ENCODE measurements at regions of chr6 and their contacts with region 1.

Region 1: DNA sequence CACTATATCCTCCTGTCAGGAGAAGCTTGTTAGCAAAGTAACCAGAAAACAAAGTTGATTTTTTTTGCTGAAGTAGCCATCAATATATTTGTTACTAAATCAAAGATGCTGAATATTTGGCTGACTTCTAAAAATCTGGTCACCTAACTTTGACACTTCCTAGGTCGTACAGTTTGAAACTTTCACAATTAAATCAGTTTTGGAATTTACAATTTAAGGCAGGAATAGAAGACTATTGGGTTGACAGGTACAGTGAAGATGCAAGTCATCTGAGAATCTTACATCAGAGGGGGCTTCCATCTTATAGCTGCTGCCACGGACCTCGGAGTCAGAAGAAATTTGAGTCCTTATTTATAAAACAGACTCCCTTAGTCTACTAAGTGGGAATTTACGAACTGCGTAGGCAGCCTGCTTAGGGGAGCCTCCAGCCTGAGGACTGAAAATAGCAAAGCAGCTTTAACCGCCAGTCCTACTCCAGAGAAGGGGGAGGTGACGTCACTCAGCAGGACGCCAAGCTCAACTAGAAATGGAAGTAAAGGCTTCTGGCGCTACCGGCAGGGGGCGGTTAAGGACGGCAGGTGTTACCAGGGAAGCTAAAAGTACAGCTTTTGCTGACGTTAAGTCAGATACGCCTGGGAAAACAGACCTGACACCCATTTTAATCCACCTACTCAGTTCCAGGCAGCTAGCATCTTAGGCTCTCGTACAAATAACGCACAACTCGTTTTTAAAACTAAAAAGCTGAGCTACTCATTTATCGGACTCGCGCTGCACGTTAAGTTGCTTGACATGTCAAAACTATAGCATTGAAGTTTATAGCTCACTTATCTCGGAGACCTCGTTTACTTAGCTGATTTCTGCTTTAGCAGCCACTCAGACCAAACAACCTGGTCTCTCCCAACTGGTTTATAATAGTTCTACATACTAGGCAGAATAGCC is 61.1 kb upstream of the HFE start:
- DNase-seq: peak; percentile 74 to 99 (median 89)
- ATAC-seq: peak; percentile 43
- H3K4me3 ChIP-seq: peak overlapping the region; percentile 50 to 76
- H3K4me3 Mint-ChIP-seq: peak overlapping the region; percentile 86
- H3K27ac ChIP-seq: peak overlapping the region; percentile 93 to 96
- H3K27ac Mint-ChIP-seq: peak overlapping the region; percentile 98
- H3K4me1 ChIP-seq: peaks cover 25% of the 10 kb centered on the region
- H3K4me1 Mint-ChIP-seq: peaks cover 48% of the 10 kb centered on the region
- H3K27me3 ChIP-seq: no peaks in the 10 kb centered on the region
- H3K27me3 Mint-ChIP-seq: no peaks in the 10 kb centered on the region
- CTCF ChIP-seq: peak; percentile 80

Region 2: GRCh38 chr6:25962149-25963127 is 63.7 kb before region 1 on chr6 and contains the start of gene TRIM38:
- CTCF ChIA-PET with region 1: interaction called, 3 read pairs
- POLR2A ChIA-PET with region 1: interaction called, 15 read pairs
- intact Hi-C with region 1: loop called in 1 of 2 experiments (anchors 2 kb)
- DNase-seq: peak; percentile 50 to 95 (median 77)
- ATAC-seq: peak; percentile 86
- H3K4me3 ChIP-seq: peak within 1 kb of the TSS; percentile 76 to 86
- H3K4me3 Mint-ChIP-seq: peak within 1 kb of the TSS; percentile 95
- H3K27ac ChIP-seq: peak within 1 kb of the TSS; percentile 91 to 95
- H3K27ac Mint-ChIP-seq: peak within 1 kb of the TSS; percentile 98
- H3K4me1 ChIP-seq: peaks cover 64% of the 10 kb centered on the region
- H3K4me1 Mint-ChIP-seq: peaks cover 81% of the 10 kb centered on the region
- H3K27me3 ChIP-seq: no peaks in the 10 kb centered on the region
- H3K27me3 Mint-ChIP-seq: no peaks in the 10 kb centered on the region
- CTCF ChIP-seq: no peak
- total RNA-seq, gene TRIM38: 13.2 to 13.6 TPM

Region 3: DNA sequence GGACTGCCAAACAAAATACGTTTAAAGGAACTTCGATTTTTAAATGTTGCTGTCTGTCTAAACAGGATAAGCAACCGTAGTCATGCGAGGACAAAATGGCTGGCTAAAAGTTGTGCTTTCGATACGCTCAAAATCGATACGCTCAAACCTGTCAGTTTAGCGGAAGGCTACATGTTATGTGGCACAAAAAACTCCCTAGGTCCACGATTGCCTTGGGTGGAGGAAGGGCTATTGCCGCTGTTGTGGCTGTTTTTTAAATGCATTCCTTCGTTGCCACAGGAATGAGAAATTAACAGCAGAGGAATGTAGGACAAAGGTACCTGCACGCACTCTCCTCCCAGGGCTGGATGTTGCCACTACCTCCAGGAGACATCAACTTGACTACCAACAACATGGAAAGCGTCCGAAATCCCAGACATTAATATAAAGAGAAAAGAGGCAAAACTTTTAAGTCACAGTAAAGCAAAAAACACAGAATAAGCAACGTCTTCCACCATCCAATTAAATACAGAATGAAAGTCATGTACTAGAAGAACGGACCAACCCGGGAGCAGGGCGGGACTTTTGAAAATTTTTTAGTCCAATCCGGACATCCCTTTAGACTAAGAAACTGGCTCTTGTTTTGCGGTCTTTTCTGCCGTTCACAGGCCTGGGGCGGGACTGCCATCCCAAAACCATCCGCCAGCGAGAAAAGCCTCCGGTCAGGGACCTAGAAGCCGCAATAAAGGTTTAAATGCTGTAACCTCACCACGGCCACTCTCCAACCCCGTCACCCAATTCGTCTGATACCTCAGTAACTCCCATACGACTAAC is 28.9 kb after region 1 on chr6:
- CTCF ChIA-PET with region 1: interaction called, 3 read pairs
- POLR2A ChIA-PET with region 1: interaction called, 70 read pairs
- intact Hi-C with region 1: loop called (anchors 1 kb)
- DNase-seq: peak; percentile 71 to 94 (median 88)
- ATAC-seq: peak; percentile 72
- H3K4me3 ChIP-seq: peak overlapping the region; percentile 75 to 85
- H3K4me3 Mint-ChIP-seq: peak overlapping the region; percentile 96
- H3K27ac ChIP-seq: peak overlapping the region; percentile 85 to 96
- H3K27ac Mint-ChIP-seq: peak overlapping the region; percentile 99
- H3K4me1 ChIP-seq: peaks cover 17% of the 10 kb centered on the region
- H3K4me1 Mint-ChIP-seq: peaks cover 23% of the 10 kb centered on the region
- H3K27me3 ChIP-seq: no peaks in the 10 kb centered on the region
- H3K27me3 Mint-ChIP-seq: no peaks in the 10 kb centered on the region
- CTCF ChIP-seq: no peak

Region 4: DNA sequence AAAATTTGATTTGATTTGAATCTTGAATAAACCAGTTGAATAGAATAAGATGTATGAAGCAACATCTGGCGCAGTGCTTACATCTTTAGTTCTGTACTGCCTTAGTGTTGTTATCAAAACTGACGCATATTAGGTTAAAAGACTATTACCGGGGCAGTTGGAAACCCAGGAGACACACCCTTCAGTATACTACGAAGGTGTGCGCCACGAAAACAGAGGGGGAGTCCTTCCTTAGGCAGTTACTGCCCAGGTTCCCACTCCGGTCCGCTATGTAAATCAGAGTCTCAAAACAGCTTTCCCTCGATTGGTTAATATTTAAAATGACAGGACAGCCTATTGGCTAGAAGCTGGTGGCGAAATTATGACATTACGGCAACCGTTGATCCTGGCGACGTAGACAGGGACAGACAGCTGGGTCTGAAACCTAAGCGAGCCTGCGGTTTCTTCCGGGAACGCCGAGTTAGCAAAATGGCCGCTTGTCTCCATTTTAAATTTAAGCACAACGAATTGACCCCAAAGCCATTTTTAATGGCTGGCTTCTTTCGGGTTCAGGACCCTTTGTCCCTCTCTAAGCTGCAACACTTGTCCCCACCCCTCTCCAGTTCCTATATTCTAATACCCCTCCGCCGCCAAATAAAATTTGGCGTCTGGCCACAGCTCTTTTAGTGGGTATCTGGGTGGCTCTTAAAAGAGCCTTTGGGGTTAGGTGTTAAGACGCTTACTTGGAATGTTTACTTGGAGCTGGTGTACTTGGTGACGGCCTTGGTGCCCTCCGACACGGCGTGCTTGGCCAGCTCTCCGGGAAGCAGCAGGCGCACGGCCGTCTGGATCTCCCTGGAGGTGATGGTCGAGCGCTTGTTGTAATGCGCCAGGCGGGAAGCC is 96.9 kb after region 1 on chr6:
- CTCF ChIA-PET with region 1: interaction called, 6 read pairs
- POLR2A ChIA-PET with region 1: interaction called, 340 read pairs
- intact Hi-C with region 1: loop called in 1 of 2 experiments (anchors 1 kb)
- DNase-seq: peak; percentile 73 to 99 (median 91)
- ATAC-seq: peak; percentile 54
- H3K4me3 ChIP-seq: peak overlapping the region; percentile 78 to 98
- H3K4me3 Mint-ChIP-seq: peak overlapping the region; percentile 94
- H3K27ac ChIP-seq: peak overlapping the region; percentile 87 to 94
- H3K27ac Mint-ChIP-seq: peak overlapping the region; percentile 99
- H3K4me1 ChIP-seq: peaks cover 20% of the 10 kb centered on the region
- H3K4me1 Mint-ChIP-seq: peaks cover 27% of the 10 kb centered on the region
- H3K27me3 ChIP-seq: no peaks in the 10 kb centered on the region
- H3K27me3 Mint-ChIP-seq: no peaks in the 10 kb centered on the region
- CTCF ChIP-seq: no peak

Region 5: GRCh38 chr6:26136321-26136720 is 110.2 kb after region 1 on chr6:
- CTCF ChIA-PET with region 1: no interaction called
- POLR2A ChIA-PET with region 1: no interaction called
- intact Hi-C with region 1: no loop called
- DNase-seq: no peak
- ATAC-seq: no peak
- H3K4me3 ChIP-seq: no peak overlapping the region
- H3K4me3 Mint-ChIP-seq: no peak overlapping the region
- H3K27ac ChIP-seq: no peak overlapping the region
- H3K27ac Mint-ChIP-seq: no peak overlapping the region
- H3K4me1 ChIP-seq: no peaks in the 10 kb centered on the region
- H3K4me1 Mint-ChIP-seq: peaks cover 36% of the 10 kb centered on the region
- H3K27me3 ChIP-seq: no peaks in the 10 kb centered on the region
- H3K27me3 Mint-ChIP-seq: no peaks in the 10 kb centered on the region
- CTCF ChIP-seq: no peak

Region 6: GRCh38 chr6:26285143-26286134 is 259.3 kb after region 1 on chr6:
- CTCF ChIA-PET with region 1: no interaction called
- POLR2A ChIA-PET with region 1: interaction called, 11 read pairs
- intact Hi-C with region 1: loop called in 1 of 2 experiments (anchors 2 kb)
- DNase-seq: peak; percentile 83 to 99 (median 96)
- ATAC-seq: peak; percentile 82
- H3K4me3 ChIP-seq: peak overlapping the region; percentile 73 to 76
- H3K4me3 Mint-ChIP-seq: peak overlapping the region; percentile 91
- H3K27ac ChIP-seq: peak overlapping the region; percentile 89 to 96
- H3K27ac Mint-ChIP-seq: peak overlapping the region; percentile 97
- H3K4me1 ChIP-seq: peaks cover 14% of the 10 kb centered on the region
- H3K4me1 Mint-ChIP-seq: peaks cover 31% of the 10 kb centered on the region
- H3K27me3 ChIP-seq: no peaks in the 10 kb centered on the region
- H3K27me3 Mint-ChIP-seq: no peaks in the 10 kb centered on the region
- CTCF ChIP-seq: no peak

Region 7: DNA sequence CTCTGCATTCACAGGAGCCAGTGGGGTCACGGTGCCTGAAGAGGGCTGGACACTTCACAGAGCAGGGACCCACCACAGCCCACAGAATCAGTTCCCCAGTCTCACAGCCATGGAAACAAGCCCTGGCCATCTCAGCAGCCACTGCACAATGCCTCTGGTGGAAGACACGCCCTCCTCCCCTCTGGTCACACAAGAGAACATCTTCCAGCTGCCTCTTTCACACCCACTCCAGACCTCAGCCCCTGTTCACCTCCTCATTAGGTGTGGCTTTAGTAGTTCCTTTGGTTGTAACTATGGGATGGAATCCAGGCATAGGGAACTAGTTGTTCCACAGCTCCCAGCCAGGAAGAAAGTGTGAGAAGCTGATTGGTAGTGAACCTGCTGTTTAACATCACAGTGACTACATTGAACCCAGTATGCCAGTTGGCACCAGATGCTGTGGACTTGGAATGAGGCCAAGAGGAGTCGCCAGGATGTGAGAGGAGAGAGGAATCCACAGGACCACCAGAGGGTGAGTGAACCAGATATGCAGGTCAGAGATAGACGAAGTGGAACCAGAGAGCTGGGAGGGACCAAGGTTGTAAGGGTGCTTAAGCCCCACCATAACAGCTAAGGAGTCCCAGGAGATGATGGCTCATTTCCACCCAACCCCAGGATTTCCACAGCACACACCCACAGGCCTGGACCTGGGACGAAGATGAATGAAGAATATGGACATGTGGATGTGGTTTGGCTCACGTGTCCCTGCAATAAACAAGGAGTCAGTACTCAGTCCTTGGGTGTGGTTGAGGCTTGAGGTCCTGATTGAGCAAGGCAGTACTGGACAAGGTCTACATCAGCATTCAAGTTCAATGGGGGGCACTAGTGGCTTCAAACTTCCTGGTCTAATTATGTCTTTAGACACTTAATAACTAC is 405.4 kb after region 1 on chr6:
- CTCF ChIA-PET with region 1: no interaction called
- POLR2A ChIA-PET with region 1: no interaction called
- intact Hi-C with region 1: no loop called
- DNase-seq: no peak
- ATAC-seq: no peak
- H3K4me3 ChIP-seq: no peak overlapping the region
- H3K4me3 Mint-ChIP-seq: no peak overlapping the region
- H3K27ac ChIP-seq: no peak overlapping the region
- H3K27ac Mint-ChIP-seq: no peak overlapping the region
- H3K4me1 ChIP-seq: no peaks in the 10 kb centered on the region
- H3K4me1 Mint-ChIP-seq: no peaks in the 10 kb centered on the region
- H3K27me3 ChIP-seq: no peaks in the 10 kb centered on the region
- H3K27me3 Mint-ChIP-seq: no peaks in the 10 kb centered on the region
- CTCF ChIP-seq: no peak

Region 8: DNA sequence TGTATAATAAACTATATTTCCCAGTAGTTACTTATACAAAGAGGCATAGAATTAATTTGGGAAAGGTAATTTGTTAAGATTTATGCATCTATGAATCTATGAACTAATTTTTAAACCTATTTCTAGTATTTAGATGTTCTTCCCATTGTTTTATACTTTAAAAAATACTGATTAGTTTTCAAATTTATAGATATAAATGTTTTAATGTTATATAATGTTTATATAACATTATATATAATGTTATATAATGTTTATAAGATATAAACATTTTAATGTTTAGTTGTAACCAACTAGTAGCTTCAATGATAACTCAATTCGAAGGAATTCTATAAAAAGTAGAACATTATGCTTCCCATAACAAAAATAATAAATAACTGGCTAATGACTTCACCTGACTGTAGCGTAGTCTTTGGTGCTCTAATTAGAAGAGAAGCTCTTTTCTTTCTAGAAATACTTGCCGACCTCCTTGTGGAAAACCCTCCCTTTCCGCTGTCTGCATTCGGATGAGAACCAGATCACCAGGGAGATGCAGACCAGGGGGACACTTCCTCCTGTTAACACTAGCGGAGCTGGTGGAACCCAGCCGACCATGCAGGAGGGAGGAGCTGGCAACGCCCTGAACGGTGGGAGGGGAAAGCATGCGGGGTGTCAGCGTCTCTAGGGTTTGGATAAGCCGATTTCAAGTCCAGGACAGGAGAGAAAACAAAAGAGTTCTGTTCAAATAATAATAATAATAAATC is 1727.7 kb after region 1 on chr6:
- CTCF ChIA-PET with region 1: no interaction called
- POLR2A ChIA-PET with region 1: no interaction called
- intact Hi-C with region 1: loop called in 1 of 2 experiments (anchors 10 kb)
- DNase-seq: peak; percentile 24 to 79 (median 64)
- ATAC-seq: no peak
- H3K4me3 ChIP-seq: peak overlapping the region; percentile 69 to 84
- H3K4me3 Mint-ChIP-seq: peak overlapping the region; percentile 86
- H3K27ac ChIP-seq: peak overlapping the region in 1 of 2 experiments; percentile 25
- H3K27ac Mint-ChIP-seq: peak overlapping the region; percentile 86
- H3K4me1 ChIP-seq: peaks cover 12% of the 10 kb centered on the region
- H3K4me1 Mint-ChIP-seq: peaks cover 34% of the 10 kb centered on the region
- H3K27me3 ChIP-seq: peaks cover 0 to 2% of the 10 kb centered on the region in 2 experiments
- H3K27me3 Mint-ChIP-seq: no peaks in the 10 kb centered on the region
- CTCF ChIP-seq: no peak